Ovary (tissue), 10 donors: ENCODE measurements at regions of chr17 and their contacts with region 1.

Region 1: GRCh38 chr17:78214706-78215061 is 631 bp downstream of the BIRC5 start:
- DNase-seq: no peak
- H3K4me3 ChIP-seq: no peak overlapping the region
- H3K27ac ChIP-seq: no peak overlapping the region
- H3K4me1 ChIP-seq: peaks cover 1% of the 10 kb centered on the region
- H3K27me3 ChIP-seq: no peaks in the 10 kb centered on the region
- CTCF ChIP-seq: no peak
- EP300 ChIP-seq: no peak
- POLR2A ChIP-seq: no peak

Region 2: GRCh38 chr17:78231991-78232858 is 17.5 kb after region 1 on chr17:
- intact Hi-C with region 1: loop called in 1 of 4 experiments (anchors 2 kb)
- DNase-seq: no peak
- H3K4me3 ChIP-seq: no peak overlapping the region
- H3K27ac ChIP-seq: no peak overlapping the region
- H3K4me1 ChIP-seq: peaks cover 3% of the 10 kb centered on the region
- H3K27me3 ChIP-seq: no peaks in the 10 kb centered on the region
- CTCF ChIP-seq: no peak
- EP300 ChIP-seq: no peak
- POLR2A ChIP-seq: no peak